ENCODE measurements at regions of chr11 and their contacts with region 1.

Region 1: GRCh38 chr11:8807544-8808225 is 103.3 kb upstream of the AKIP1 start:
- DNase-seq: peak in 3 of 4 donors; percentile 40 to 56 (median 47)
- ATAC-seq: no peak
- H3K4me3 ChIP-seq: no peak overlapping the region
- H3K27ac ChIP-seq: peak overlapping the region; percentile 31 to 88 (median 75)
- H3K4me1 ChIP-seq: peaks cover 72% of the 10 kb centered on the region
- H3K27me3 ChIP-seq: no peaks in the 10 kb centered on the region
- CTCF ChIP-seq: no peak
- POLR2A ChIP-seq: no peak

Region 2: GRCh38 chr11:8709002-8709672 is 98.5 kb before region 1 on chr11:
- intact Hi-C with region 1: loop called (anchors 10 kb)
- DNase-seq: peak; percentile 54 to 76 (median 70)
- ATAC-seq: peak; percentile 52
- H3K4me3 ChIP-seq: no peak overlapping the region
- H3K27ac ChIP-seq: peak overlapping the region; percentile 42 to 81 (median 72)
- H3K4me1 ChIP-seq: peaks cover 37% of the 10 kb centered on the region
- H3K27me3 ChIP-seq: no peaks in the 10 kb centered on the region
- CTCF ChIP-seq: no peak
- POLR2A ChIP-seq: peak in 2 of 3 donors; percentile 6 to 8